Activated CD8-positive, alpha-beta memory T cell treated with anti-CD3 and anti-CD28 coated beads, Interleukin-2, amount 10 ng/mL, durations not matched to agents 7 days and 5 days (primary cell): ENCODE measurements at regions of chr17 and their contacts with region 1.

Region 1: GRCh38 chr17:48724251-48725003 is 1.4 kb downstream of the PRAC2 start:
- DNase-seq: peak; percentile 87
- ATAC-seq: peak; percentile 75
- H3K4me3 Mint-ChIP-seq: peak overlapping the region; percentile 12
- H3K27ac Mint-ChIP-seq: peak overlapping the region; percentile 77
- H3K4me1 Mint-ChIP-seq: peaks cover 25% of the 10 kb centered on the region
- H3K27me3 Mint-ChIP-seq: peaks cover 96% of the 10 kb centered on the region

Region 2: GRCh38 chr17:48671697-48672171 is 52.7 kb before region 1 on chr17:
- CTCF ChIA-PET with region 1: interaction called, 14 read pairs
- DNase-seq: peak; percentile 76
- ATAC-seq: peak; percentile 72
- H3K4me3 Mint-ChIP-seq: peak overlapping the region; percentile 30
- H3K27ac Mint-ChIP-seq: no peak overlapping the region
- H3K4me1 Mint-ChIP-seq: peaks cover 4% of the 10 kb centered on the region
- H3K27me3 Mint-ChIP-seq: peaks cover 57% of the 10 kb centered on the region

Region 3: DNA sequence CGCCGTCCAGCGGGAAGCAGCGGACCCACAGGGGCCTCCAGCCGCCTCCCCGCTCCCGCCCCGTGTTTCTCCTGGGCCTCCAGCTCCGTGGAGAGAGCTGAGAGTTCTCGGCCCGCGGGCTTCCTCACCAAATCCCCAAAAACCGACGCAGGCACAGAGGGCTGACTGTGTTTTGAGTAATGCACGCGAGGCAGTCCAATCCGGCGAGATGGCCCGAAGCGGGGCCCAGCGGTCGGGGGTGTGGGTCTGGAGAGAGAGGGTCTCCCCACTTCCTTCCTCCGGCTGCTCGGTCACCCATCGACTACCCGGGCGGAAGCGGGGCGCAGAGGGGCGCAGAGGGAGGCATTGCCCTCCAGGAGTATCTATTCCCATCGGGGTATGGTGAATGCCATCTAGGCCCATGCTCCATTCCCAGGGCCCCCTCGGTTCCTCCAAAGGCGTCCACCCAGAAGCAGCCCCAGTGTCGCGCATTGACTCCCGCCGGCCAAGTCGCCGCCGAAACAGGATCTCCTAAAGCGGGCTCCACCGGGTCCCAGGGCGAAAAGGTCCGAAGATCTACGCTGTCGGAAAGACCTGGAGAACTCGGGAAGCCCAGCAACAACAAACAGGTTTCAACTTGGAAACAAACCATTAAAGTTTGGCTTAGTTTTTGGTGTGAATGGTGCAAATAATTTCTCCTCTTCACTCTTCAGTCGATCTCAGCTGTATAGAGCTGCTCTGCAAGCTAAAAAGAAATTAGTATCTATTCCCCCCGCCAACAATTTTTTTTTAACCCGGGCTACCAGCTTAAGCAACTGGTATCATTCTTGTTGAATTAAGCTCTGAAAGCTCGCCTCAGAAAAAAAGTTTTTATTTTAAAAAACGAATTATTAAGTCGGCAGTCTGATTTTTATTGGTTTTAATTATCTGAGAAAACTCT is 23.3 kb after region 1 on chr17:
- CTCF ChIA-PET with region 1: interaction called, 37 read pairs
- DNase-seq: no peak
- ATAC-seq: no peak
- H3K4me3 Mint-ChIP-seq: no peak overlapping the region
- H3K27ac Mint-ChIP-seq: no peak overlapping the region
- H3K4me1 Mint-ChIP-seq: peaks cover 4% of the 10 kb centered on the region
- H3K27me3 Mint-ChIP-seq: peaks cover 92% of the 10 kb centered on the region

Region 4: GRCh38 chr17:48804925-48805411 is 80.5 kb after region 1 on chr17:
- CTCF ChIA-PET with region 1: interaction called, 14 read pairs
- DNase-seq: peak; percentile 74
- ATAC-seq: peak; percentile 91
- H3K4me3 Mint-ChIP-seq: no peak overlapping the region
- H3K27ac Mint-ChIP-seq: no peak overlapping the region
- H3K4me1 Mint-ChIP-seq: peaks cover 2% of the 10 kb centered on the region
- H3K27me3 Mint-ChIP-seq: peaks cover 31% of the 10 kb centered on the region

Region 5: GRCh38 chr17:49031965-49032928 is 307.8 kb after region 1 on chr17:
- CTCF ChIA-PET with region 1: interaction called, 13 read pairs
- DNase-seq: peak; percentile 65
- ATAC-seq: peak; percentile 79
- H3K4me3 Mint-ChIP-seq: no peak overlapping the region
- H3K27ac Mint-ChIP-seq: no peak overlapping the region
- H3K4me1 Mint-ChIP-seq: peaks cover 6% of the 10 kb centered on the region
- H3K27me3 Mint-ChIP-seq: no peaks in the 10 kb centered on the region